ENCODE measurements at regions of chr10 and their contacts with region 1.

Region 1: DNA sequence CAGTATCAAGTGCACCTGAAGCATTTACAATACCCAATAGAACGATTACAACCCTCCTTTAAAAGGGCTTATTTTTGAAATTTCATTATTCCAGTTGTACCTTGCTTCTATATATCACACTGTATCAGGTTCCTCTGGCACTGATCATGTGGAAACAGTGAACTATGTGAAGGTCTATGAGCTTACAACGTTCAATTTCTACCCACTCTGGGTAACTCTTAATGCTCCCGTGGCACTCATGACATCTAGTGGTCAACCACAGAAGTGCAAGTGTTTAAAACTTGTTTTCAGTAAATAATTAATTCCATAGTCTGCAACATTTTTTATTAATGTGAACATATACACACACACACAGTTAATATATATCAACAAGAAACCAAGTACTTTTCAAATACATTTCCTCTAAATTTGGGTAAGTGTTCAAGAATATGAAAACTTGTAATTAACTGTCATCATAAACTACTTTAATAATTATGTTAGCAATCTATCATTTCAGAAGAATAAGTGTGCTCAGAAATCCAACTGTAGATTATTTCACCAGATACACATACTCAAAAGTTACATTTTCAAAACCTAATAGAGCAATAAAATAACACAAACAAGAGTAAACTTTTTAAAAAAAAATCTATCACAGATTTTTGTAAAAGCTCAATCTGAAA is 61.0 kb downstream of the MPP7 start:
- H3K4me3 ChIP-seq: no peak overlapping the region
- H3K27ac ChIP-seq: no peak overlapping the region
- H3K4me1 ChIP-seq: no peaks in the 10 kb centered on the region
- CTCF ChIP-seq: peak; percentile 59; the same call in 1 of the 2 replicates

Region 2: GRCh38 chr10:27805180-27805579 is 436.7 kb before region 1 on chr10:
- CTCF ChIA-PET with region 1: no interaction called
- POLR2A ChIA-PET with region 1: no interaction called
- H3K4me3 ChIP-seq: no peak overlapping the region
- H3K27ac ChIP-seq: no peak overlapping the region
- H3K4me1 ChIP-seq: no peaks in the 10 kb centered on the region
- CTCF ChIP-seq: no peak

Region 3: DNA sequence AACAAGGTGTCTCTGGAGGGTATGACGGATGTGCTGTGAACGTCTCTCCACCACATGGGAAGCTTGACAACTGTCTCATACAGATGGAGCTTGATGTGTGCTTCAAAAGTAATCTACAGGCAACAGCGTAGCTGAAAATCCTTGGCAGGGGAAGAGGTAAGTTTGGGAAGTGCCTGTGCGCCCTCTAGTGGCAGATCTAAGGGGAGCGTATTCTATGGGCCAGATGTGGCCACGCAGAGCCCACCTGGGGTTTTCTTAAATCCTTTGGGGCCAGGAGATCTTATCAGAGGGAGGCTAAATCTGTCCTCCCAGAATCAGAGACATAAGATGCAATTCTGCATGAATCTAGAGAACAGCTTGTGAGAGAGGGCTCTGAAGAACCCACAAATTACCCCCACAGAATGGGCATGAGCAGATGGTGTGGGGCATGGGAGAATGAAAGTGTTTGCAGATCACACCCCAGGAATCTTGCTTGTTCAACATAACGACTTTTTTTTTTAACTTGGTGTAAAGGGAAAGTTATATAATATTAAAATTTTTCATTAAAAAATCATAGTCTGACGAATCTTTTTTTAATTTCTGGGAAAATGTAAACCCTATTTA is 152.2 kb after region 1 on chr10:
- CTCF ChIA-PET with region 1: interaction called, 45 read pairs
- POLR2A ChIA-PET with region 1: no interaction called
- H3K4me3 ChIP-seq: no peak overlapping the region
- H3K27ac ChIP-seq: no peak overlapping the region
- H3K4me1 ChIP-seq: no peaks in the 10 kb centered on the region
- CTCF ChIP-seq: peak; percentile 55; the same call in 1 of the 2 replicates